Heart right ventricle (tissue), 16 donors: ENCODE measurements at regions of chr12 and their contacts with region 1.

Region 1: GRCh38 chr12:50084775-50085614 is at the start of gene SMARCD1:
- DNase-seq: peak; percentile 93
- ATAC-seq: peak; percentile 95 to 98 (median 96)
- H3K4me3 ChIP-seq: peak within 1 kb of the TSS; percentile 73 to 99 (median 90)
- H3K27ac ChIP-seq: peak within 1 kb of the TSS; percentile 95 to 100 (median 98)
- H3K4me1 ChIP-seq: peaks cover 0 to 34% (median 13%) of the 10 kb centered on the region in 9 donors
- H3K27me3 ChIP-seq: no peaks in the 10 kb centered on the region
- CTCF ChIP-seq: peak in 8 of 9 donors; percentile 12 to 78 (median 59)
- total RNA-seq, gene SMARCD1: 13.3 to 24.0 (median 17.4) TPM

Region 2: GRCh38 chr12:50167041-50167828 is 82.2 kb after region 1 on chr12 and contains the start of gene CERS5:
- intact Hi-C with region 1: loop called in 6 of 10 experiments (anchors 1 to 5 kb)
- DNase-seq: peak; percentile 98 to 99
- ATAC-seq: peak; percentile 98 to 100 (median 99)
- H3K4me3 ChIP-seq: peak within 1 kb of the TSS; percentile 57 to 100 (median 94)
- H3K27ac ChIP-seq: peak within 1 kb of the TSS; percentile 60 to 99 (median 94)
- H3K4me1 ChIP-seq: peaks cover 6 to 27% (median 13%) of the 10 kb centered on the region in 9 donors
- H3K27me3 ChIP-seq: no peaks in the 10 kb centered on the region
- CTCF ChIP-seq: peak in 7 of 9 donors; percentile 21 to 51 (median 41)
- total RNA-seq, gene CERS5: 8.3 to 15.6 (median 11.4) TPM